Activated B cell treated with CpG ODN at 0.5 μM for 24 hours (primary cell): ENCODE measurements at regions of chr16 and their contacts with region 1.

Region 1: DNA sequence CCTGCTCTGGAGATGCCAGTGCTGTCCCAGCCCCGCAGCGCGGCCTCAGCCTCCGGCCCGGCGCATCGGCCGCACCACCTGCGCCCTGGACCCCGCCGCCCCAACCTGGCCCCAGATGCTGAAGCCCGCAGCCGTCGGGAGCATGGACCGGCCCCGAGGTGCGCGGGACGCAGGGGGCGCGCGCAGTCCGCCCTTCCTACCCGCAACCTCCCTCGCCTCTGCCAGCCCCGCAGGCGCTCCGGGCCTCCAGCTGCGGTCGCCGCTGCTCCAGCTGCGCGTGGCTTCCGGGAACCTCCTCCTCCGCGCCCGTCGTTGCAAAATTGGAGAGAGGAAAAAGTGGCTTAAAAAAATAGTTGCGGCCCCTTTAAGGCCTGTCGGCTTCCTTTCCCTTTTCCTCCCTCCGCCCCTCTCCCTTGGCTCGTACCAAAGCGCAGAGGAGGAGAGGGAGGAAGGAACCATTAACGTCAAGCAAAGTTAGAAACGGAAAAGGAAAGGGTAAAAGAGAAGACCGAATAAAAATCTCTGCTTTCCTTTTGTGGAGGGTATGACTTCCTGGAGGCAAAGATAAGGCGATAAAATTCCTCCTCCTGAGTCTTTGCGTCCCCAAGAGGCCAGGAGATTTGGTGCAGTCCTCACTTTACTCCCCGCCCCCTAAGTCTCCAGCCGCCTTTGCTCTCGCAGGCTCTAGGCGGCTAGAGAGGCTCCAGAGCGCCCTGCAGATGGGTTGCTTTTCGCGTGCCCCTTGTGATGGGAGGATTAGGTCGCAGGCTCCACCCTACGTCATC is at the start of gene CDIPT:
- DNase-seq: peak; percentile 79
- ATAC-seq: peak; percentile 98
- H3K4me3 Mint-ChIP-seq: peak within 1 kb of the TSS; percentile 94
- H3K27ac Mint-ChIP-seq: peak within 1 kb of the TSS; percentile 100
- H3K4me1 Mint-ChIP-seq: peaks cover 24% of the 10 kb centered on the region
- H3K27me3 Mint-ChIP-seq: peaks cover 6% of the 10 kb centered on the region
- CTCF ChIP-seq: no peak
- total RNA-seq, gene CDIPT: 28.7 and 29.8 TPM in 2 replicates

Region 2: DNA sequence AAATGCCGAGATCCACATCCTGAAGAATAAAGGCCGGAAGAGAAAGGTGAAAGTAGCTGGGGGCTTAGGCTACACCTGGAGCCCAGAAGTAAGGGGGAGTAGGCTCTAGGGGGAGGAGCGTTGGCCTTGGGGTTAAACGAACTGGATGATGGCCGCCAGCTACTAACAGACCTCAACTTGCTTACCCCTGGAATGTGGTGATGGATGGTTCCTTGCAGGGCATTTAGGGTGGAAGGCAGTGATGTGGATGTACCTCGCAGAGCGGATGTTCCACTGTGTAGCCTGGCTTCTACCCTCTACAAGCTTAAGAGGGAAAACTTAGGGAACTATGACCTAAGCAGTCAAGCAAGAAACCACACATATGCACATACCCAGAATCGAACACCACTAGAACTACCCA is 59.1 kb before region 1 on chr16:
- CTCF ChIA-PET with region 1: no interaction called
- POLR2A ChIA-PET with region 1: no interaction called
- intact Hi-C with region 1: no loop called
- DNase-seq: no peak
- ATAC-seq: no peak
- H3K4me3 Mint-ChIP-seq: peak overlapping the region; percentile 100
- H3K27ac Mint-ChIP-seq: peak overlapping the region; percentile 100
- H3K4me1 Mint-ChIP-seq: peaks cover 35% of the 10 kb centered on the region
- H3K27me3 Mint-ChIP-seq: no peaks in the 10 kb centered on the region
- CTCF ChIP-seq: no peak

Region 3: DNA sequence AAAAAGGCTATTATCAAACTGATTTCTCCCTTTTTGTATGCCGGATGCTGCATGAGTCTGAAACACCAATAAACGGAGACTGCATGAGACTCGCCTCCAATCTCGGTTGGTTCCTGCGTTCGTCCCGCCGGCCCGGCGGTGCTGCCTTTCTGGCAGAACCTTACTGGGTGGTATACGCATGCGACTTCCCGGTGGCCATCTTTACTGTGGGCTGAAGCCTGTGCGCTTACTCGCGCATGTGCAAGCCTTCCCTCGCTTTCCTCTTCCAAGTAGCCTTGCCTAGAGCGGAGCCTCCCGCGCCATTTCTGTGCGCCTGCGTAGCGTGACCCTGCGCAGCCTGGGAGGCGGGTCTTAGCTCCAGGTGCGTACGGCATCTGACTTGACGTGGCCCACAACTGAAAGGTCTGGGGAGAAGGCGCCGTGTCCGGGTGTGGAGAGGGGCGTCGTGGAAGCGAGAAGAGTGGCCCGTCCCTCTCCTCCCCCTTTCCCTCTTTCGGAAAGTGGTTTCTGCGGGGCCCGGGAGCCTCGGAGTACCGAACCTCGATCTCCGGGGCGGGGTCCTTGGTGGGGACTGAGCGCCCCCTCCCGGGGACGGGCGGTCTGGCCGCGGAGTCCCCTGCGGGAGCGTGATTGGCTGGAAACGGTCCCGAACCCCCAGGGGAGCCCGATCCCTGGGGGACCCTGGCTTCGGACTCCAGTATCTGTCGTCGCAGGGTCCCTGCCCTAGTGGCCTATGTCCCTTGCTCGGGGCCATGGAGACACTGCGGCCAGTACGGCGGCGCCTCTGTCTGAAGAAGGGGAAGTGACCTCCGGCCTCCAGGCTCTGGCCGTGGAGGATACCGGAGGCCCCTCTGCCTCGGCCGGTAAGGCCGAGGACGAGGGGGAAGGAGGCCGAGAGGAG is 47.0 kb before region 1 on chr16 and contains the start of gene PAGR1:
- CTCF ChIA-PET with region 1: no interaction called
- POLR2A ChIA-PET with region 1: interaction called, 4 read pairs
- intact Hi-C with region 1: loop called (anchors 1 kb)
- DNase-seq: peak; percentile 97
- ATAC-seq: peak; percentile 74
- H3K4me3 Mint-ChIP-seq: peak within 1 kb of the TSS; percentile 99
- H3K27ac Mint-ChIP-seq: peak within 1 kb of the TSS; percentile 99
- H3K4me1 Mint-ChIP-seq: peaks cover 71% of the 10 kb centered on the region
- H3K27me3 Mint-ChIP-seq: no peaks in the 10 kb centered on the region
- CTCF ChIP-seq: peak; percentile 89
- total RNA-seq, gene PAGR1: 18.6 and 20.3 TPM in 2 replicates

Region 4: GRCh38 chr16:29900102-29900887 is 37.2 kb after region 1 on chr16 and contains the start of gene ASPHD1:
- CTCF ChIA-PET with region 1: no interaction called
- POLR2A ChIA-PET with region 1: no interaction called
- intact Hi-C with region 1: loop called (anchors 1 kb)
- DNase-seq: no peak
- ATAC-seq: peak; percentile 90
- H3K4me3 Mint-ChIP-seq: peak within 1 kb of the TSS; percentile 77
- H3K27ac Mint-ChIP-seq: no peak within 1 kb of the TSS
- H3K4me1 Mint-ChIP-seq: peaks cover 5% of the 10 kb centered on the region
- H3K27me3 Mint-ChIP-seq: peaks cover 33% of the 10 kb centered on the region
- CTCF ChIP-seq: no peak
- total RNA-seq, gene ASPHD1: 0.12 TPM in 1 of 2 replicates, not detected in the other

Region 5: GRCh38 chr16:29926005-29926710 is 63.1 kb after region 1 on chr16 and contains the start of gene KCTD13:
- CTCF ChIA-PET with region 1: no interaction called
- POLR2A ChIA-PET with region 1: interaction called, 8 read pairs
- intact Hi-C with region 1: loop called (anchors 1 kb)
- DNase-seq: peak; percentile 100
- ATAC-seq: peak; percentile 90
- H3K4me3 Mint-ChIP-seq: peak within 1 kb of the TSS; percentile 94
- H3K27ac Mint-ChIP-seq: peak within 1 kb of the TSS; percentile 94
- H3K4me1 Mint-ChIP-seq: peaks cover 28% of the 10 kb centered on the region
- H3K27me3 Mint-ChIP-seq: no peaks in the 10 kb centered on the region
- CTCF ChIP-seq: no peak
- total RNA-seq, gene KCTD13: 37.5 and 44.4 TPM in 2 replicates

Region 6: DNA sequence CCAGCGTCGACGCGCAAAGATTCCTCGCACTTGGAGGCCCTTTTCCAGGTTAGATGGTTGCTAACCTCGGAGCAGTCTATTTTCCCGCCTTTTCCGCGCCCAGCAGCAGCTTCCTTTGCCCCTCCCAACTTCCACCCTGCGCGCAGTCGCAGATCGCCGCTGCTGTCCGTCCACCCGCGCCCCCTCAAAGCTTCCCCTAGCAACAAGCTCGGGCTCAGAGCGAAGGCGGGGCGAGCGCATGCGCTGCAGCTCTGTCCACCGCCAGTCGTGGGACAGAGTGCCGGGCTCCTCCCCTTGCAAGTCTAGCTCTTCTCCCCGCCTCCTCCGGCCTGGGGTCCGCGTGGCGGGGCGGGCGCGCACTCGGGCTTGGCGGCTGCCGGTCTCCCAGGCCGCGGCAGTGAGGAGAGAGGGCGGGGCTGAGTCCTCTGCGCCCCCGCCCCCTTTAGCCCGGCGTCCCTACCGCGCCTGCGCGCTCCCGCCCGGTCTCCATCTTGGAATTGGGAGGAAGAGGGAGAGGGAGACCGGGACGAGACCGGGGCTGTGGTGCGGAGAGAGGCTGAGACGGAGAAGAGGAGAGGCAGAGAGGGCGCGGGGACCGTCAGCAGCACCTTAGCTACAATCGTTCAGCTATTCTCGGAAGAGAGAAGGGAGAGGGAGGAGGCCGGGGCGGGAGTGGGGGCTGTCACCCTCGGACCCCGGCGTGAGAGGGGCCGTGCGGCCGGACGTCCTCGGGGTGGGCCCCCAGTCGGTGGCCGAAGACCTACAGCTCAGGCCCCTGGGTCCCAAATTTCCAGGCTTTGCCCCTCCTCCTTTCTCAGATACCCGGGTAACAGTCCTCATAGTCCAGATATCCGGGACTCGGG is 110.5 kb after region 1 on chr16 and contains the start of gene TAOK2:
- CTCF ChIA-PET with region 1: no interaction called
- POLR2A ChIA-PET with region 1: no interaction called
- intact Hi-C with region 1: loop called (anchors 1 kb)
- DNase-seq: peak; percentile 95
- ATAC-seq: peak; percentile 99
- H3K4me3 Mint-ChIP-seq: peak within 1 kb of the TSS; percentile 96
- H3K27ac Mint-ChIP-seq: peak within 1 kb of the TSS; percentile 90
- H3K4me1 Mint-ChIP-seq: peaks cover 39% of the 10 kb centered on the region
- H3K27me3 Mint-ChIP-seq: no peaks in the 10 kb centered on the region
- CTCF ChIP-seq: no peak
- total RNA-seq, gene TAOK2: 30.5 and 36.1 TPM in 2 replicates

Region 7: GRCh38 chr16:30005341-30006094 is 142.4 kb after region 1 on chr16:
- CTCF ChIA-PET with region 1: no interaction called
- POLR2A ChIA-PET with region 1: interaction called, 3 read pairs
- intact Hi-C with region 1: loop called (anchors 2 kb)
- DNase-seq: peak; percentile 31
- ATAC-seq: peak; percentile 81
- H3K4me3 Mint-ChIP-seq: no peak overlapping the region
- H3K27ac Mint-ChIP-seq: no peak overlapping the region
- H3K4me1 Mint-ChIP-seq: peaks cover 10% of the 10 kb centered on the region
- H3K27me3 Mint-ChIP-seq: peaks cover 11% of the 10 kb centered on the region
- CTCF ChIP-seq: peak; percentile 30

Region 8: GRCh38 chr16:30395155-30395991 is 532.3 kb after region 1 on chr16 and contains the start of gene ZNF48:
- CTCF ChIA-PET with region 1: no interaction called
- POLR2A ChIA-PET with region 1: no interaction called
- intact Hi-C with region 1: loop called (anchors 1 kb)
- DNase-seq: peak; percentile 77
- ATAC-seq: peak; percentile 96
- H3K4me3 Mint-ChIP-seq: peak within 1 kb of the TSS; percentile 91
- H3K27ac Mint-ChIP-seq: peak within 1 kb of the TSS; percentile 78
- H3K4me1 Mint-ChIP-seq: peaks cover 31% of the 10 kb centered on the region
- H3K27me3 Mint-ChIP-seq: no peaks in the 10 kb centered on the region
- CTCF ChIP-seq: no peak
- total RNA-seq, gene ZNF48: 11.7 and 13.0 TPM in 2 replicates